GM12878 (cell line): ENCODE measurements at regions of chr7 and their contacts with region 1.

Region 1: DNA sequence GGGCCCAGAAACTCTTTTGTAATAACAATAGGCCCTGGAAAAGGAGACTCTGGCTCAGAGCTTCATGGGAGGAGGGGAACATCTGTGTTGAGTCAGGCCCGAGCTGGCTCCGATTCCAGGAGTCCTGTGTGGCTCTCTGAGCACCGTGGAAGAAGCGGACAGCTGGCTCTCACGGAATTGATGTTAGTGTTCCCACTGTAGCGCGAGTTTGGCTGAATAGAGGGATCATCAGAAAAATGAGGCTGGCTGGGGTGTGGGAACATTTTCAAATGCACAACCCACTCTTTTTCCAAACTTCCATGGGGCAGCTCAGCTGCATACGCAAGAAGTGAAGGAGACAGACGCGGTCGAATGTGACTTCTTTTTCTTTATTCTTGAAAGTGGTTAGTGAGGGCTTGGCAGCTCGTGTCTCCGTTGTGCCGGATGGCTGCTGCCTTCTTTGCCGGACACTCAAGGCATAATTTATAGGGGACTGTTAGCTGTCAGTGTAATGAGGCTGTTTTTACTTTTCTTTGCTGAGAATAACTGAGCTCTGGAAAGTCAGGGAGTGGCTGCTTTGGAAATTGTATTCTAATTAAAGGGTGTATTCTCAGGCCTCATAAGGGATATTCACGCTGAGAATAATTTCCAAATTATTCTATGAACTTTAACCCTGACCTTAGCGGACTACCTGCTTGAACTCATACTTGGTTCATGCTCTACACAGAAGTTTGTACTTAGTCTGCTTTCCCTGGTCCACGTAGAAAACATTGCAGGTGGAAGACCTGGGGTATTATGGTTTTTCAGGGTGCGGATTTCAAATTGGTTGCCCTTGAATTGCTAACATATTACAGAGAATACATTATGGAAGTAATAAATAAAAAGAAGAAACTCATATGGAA is 23.1 kb downstream of the MDFIC start:
- DNase-seq: no peak
- ATAC-seq: no peak
- H3K4me3 ChIP-seq: no peak overlapping the region
- H3K27ac ChIP-seq: no peak overlapping the region
- H3K4me1 ChIP-seq: peaks cover 29% of the 10 kb centered on the region
- H3K27me3 ChIP-seq: no peaks in the 10 kb centered on the region
- CTCF ChIP-seq: no peak
- EP300 ChIP-seq: no peak
- POLR2A ChIP-seq: no peak
- RAD21 ChIP-seq: no peak

Region 2: DNA sequence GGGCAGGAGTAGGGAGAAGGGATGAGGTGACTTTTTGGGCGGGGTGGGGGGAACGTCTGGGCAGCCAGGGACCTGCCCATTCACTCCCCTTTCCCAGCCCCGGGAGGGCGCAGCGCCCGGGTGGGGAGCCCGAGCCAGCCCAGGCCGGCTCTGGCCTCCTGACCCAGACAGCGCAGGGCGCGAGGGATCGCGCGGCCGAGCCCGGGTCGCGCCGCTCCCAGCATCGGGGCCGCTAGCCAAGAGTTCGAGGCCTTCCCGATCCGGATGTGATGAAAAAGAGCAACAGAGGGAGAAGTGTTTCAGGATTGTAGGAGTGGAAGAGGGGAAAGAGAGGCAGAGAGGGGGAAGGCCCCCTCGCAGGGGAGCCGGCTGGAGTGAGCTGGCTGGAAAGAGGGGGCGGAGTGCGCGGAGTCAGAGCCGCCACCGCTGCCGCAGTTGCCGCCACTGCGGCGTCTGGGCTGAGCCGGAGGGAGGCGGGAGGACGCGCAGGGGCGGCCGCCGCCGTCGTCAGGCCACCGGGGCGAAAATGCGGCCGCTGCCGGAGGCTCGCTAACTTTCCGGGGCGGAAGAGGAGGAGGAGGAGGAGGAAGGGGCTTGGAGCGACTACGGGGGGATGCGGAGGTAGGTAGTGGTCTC is 22.9 kb before region 1 on chr7 and contains the start of gene MDFIC:
- CTCF ChIA-PET with region 1: interaction called, 48 read pairs
- POLR2A ChIA-PET with region 1: interaction called, 4 read pairs
- RAD21 ChIA-PET with region 1: interaction called, 32 read pairs
- SMC1A ChIA-PET with region 1: interaction called, 154 read pairs
- in situ Hi-C with region 1: no loop called
- intact Hi-C with region 1: no loop called
- DNase-seq: no peak
- ATAC-seq: peak; percentile 65
- H3K4me3 ChIP-seq: peak within 1 kb of the TSS; percentile 85
- H3K27ac ChIP-seq: peak within 1 kb of the TSS; percentile 92
- H3K4me1 ChIP-seq: peaks cover 20% of the 10 kb centered on the region
- H3K27me3 ChIP-seq: no peaks in the 10 kb centered on the region
- CTCF ChIP-seq: peak in 2 of 3 experiments; percentile 6 to 8; a peak in 1 of 6 replicates
- EP300 ChIP-seq: no peak
- POLR2A ChIP-seq: peak; percentile 90
- RAD21 ChIP-seq: no peak
- polyA plus RNA-seq, gene MDFIC: 11.5 to 16.1 TPM

Region 3: DNA sequence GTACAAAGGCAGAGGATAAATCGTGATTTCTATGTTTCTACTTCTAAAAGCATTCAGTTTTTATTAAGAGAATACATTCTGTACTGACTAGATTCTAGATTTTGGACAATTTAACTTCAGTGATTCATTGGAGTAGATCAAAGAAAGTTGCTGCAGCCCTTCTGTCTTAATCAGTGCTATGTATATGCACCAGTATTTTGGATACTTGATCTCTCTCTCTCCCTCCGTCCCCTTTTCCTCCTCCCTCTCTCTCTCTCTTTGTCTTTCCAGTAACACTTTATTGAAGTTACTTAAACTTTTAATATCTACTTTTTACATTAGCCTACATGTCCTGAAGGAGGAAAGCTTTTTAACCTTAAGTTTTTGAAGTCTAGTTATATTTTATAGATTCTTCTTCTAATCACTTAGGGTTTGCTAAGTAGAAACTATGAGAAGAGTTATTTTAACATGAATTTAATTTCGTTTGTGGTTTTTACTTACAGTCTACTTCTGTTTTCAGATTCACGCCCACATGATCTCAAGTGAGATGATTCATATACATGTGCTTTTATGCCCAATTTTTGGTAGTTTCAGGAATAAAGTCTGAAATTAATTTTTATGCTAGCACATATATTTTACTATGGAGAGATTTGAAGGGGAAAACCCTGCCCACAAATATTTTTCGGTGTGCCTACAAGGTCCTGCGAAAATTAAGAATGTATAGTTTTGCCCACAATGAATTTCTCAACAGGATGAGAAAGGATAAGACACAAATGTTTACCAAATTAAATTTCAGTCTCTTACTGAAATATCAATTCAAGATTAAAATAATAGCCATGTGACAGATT is 13.9 kb before region 1 on chr7:
- CTCF ChIA-PET with region 1: interaction called, 48 read pairs
- POLR2A ChIA-PET with region 1: interaction called, 3 read pairs
- RAD21 ChIA-PET with region 1: interaction called, 32 read pairs
- SMC1A ChIA-PET with region 1: interaction called, 154 read pairs
- in situ Hi-C with region 1: no loop called
- intact Hi-C with region 1: no loop called
- DNase-seq: no peak
- ATAC-seq: peak; percentile 49
- H3K4me3 ChIP-seq: peak overlapping the region; percentile 62
- H3K27ac ChIP-seq: peak overlapping the region; percentile 92
- H3K4me1 ChIP-seq: peaks cover 26% of the 10 kb centered on the region
- H3K27me3 ChIP-seq: no peaks in the 10 kb centered on the region
- CTCF ChIP-seq: no peak
- EP300 ChIP-seq: peak in 1 of 2 experiments; percentile 73; a peak in 2 of 4 replicates
- POLR2A ChIP-seq: no peak
- RAD21 ChIP-seq: no peak

Region 4: GRCh38 chr7:114959931-114960330 is 14.9 kb after region 1 on chr7:
- CTCF ChIA-PET with region 1: interaction called, 20 read pairs
- POLR2A ChIA-PET with region 1: interaction called, 3 read pairs
- RAD21 ChIA-PET with region 1: interaction called, 3 read pairs
- SMC1A ChIA-PET with region 1: interaction called, 9 read pairs
- in situ Hi-C with region 1: no loop called
- intact Hi-C with region 1: no loop called
- DNase-seq: peak; percentile 38
- ATAC-seq: peak; percentile 83
- H3K4me3 ChIP-seq: peak overlapping the region; percentile 10; the same call in 1 of the 2 replicates
- H3K27ac ChIP-seq: no peak overlapping the region
- H3K4me1 ChIP-seq: peaks cover 12% of the 10 kb centered on the region; the same call in 1 of the 2 replicates
- H3K27me3 ChIP-seq: no peaks in the 10 kb centered on the region
- CTCF ChIP-seq: no peak
- EP300 ChIP-seq: no peak
- POLR2A ChIP-seq: no peak
- RAD21 ChIP-seq: no peak

Region 5: DNA sequence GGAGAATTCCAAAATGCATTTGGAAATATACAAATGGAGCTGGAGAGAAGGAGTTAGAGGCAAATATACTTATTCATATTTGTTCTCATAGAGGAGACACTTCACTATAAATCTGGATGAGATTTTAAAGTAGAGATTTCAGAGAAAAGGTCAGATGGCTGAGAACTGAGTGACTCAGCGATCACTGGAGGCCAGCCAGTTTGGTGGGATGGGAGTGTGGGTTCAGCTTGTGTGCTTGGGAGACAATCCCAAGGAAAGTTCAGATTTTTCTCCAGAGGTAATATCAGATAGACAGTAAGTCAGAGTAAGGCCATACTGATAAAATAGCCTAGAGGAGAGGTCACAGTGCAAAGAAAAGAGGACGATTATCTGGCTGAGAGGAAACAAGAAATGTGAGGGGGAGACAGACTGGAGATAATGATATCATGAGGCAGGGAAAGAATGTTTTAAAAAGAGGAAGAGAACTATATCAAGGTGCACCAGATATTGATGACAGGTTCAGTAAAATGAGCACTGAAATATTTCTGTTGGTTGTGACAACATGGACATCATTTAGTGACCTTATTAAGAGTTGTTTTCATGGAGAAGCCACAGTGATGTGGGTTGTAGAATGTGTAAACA is 43.9 kb after region 1 on chr7:
- CTCF ChIA-PET with region 1: no interaction called
- POLR2A ChIA-PET with region 1: no interaction called
- RAD21 ChIA-PET with region 1: no interaction called
- SMC1A ChIA-PET with region 1: interaction called, 10 read pairs
- in situ Hi-C with region 1: no loop called
- intact Hi-C with region 1: no loop called
- DNase-seq: no peak
- ATAC-seq: no peak
- H3K4me3 ChIP-seq: no peak overlapping the region
- H3K27ac ChIP-seq: no peak overlapping the region
- H3K4me1 ChIP-seq: no peaks in the 10 kb centered on the region
- H3K27me3 ChIP-seq: no peaks in the 10 kb centered on the region
- CTCF ChIP-seq: no peak
- EP300 ChIP-seq: no peak
- POLR2A ChIP-seq: no peak
- RAD21 ChIP-seq: no peak